ENCODE measurements at regions of chr12 and their contacts with region 1.

Region 1: DNA sequence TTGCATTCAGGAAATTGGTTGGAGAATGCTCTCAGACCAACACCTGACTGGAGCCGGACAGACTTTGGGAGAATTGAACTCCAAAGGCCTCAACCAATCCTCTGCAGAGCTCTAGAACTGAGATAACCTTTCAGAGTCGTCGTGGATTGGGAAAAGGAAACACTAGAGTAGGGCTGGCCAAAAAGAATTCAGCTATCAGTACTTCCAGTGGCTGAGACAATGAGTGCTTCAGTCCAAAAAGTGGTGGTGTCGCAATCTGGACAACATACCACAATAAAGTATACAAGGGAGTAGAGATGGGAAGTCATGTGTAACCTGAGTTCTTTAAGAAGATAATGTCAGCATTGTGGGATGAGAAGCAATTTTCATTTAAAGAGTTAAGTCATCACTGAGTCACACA is 377.1 kb downstream of the SLC16A7 start:
- DNase-seq: peak; percentile 50
- H3K4me3 Mint-ChIP-seq: peak overlapping the region; percentile 46
- H3K27ac Mint-ChIP-seq: peak overlapping the region; percentile 73
- H3K4me1 Mint-ChIP-seq: peaks cover 40% of the 10 kb centered on the region
- H3K27me3 Mint-ChIP-seq: no peaks in the 10 kb centered on the region
- CTCF ChIP-seq: no peak

Region 2: GRCh38 chr12:59636945-59637691 is 335.8 kb before region 1 on chr12:
- CTCF ChIA-PET with region 1: no interaction called
- intact Hi-C with region 1: no loop called
- DNase-seq: no peak
- H3K4me3 Mint-ChIP-seq: no peak overlapping the region
- H3K27ac Mint-ChIP-seq: peak overlapping the region; percentile 30
- H3K4me1 Mint-ChIP-seq: peaks cover 12% of the 10 kb centered on the region
- H3K27me3 Mint-ChIP-seq: no peaks in the 10 kb centered on the region
- CTCF ChIP-seq: no peak

Region 3: DNA sequence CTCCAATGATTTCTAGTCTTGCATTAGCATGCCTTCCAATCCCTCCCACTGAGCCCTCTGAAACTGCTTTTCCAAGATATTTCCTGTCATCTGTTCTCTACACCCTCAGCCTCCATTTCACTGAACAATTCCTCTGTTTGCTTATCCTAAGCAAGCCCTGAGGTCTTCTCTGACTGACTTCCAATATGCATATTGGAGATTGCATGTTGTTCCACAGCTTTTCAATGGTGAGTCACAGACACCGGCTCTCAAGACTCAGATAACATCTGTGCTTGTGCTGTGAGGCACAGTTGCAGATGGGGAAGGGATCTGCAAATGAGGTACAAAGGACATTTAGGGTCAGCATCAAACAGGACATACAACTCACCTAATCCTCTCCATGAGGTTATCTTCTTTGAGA is 236.1 kb before region 1 on chr12:
- CTCF ChIA-PET with region 1: no interaction called
- intact Hi-C with region 1: no loop called
- DNase-seq: peak; percentile 9
- H3K4me3 Mint-ChIP-seq: no peak overlapping the region
- H3K27ac Mint-ChIP-seq: peak overlapping the region; percentile 21
- H3K4me1 Mint-ChIP-seq: peaks cover 16% of the 10 kb centered on the region
- H3K27me3 Mint-ChIP-seq: no peaks in the 10 kb centered on the region
- CTCF ChIP-seq: no peak

Region 4: GRCh38 chr12:59843313-59843712 is 129.6 kb before region 1 on chr12:
- CTCF ChIA-PET with region 1: no interaction called
- intact Hi-C with region 1: loop called (anchors 10 kb)
- DNase-seq: no peak
- H3K4me3 Mint-ChIP-seq: no peak overlapping the region
- H3K27ac Mint-ChIP-seq: no peak overlapping the region
- H3K4me1 Mint-ChIP-seq: peaks cover 23% of the 10 kb centered on the region
- H3K27me3 Mint-ChIP-seq: no peaks in the 10 kb centered on the region
- CTCF ChIP-seq: no peak

Region 5: GRCh38 chr12:59940631-59941342 is 32.2 kb before region 1 on chr12:
- CTCF ChIA-PET with region 1: interaction called, 4 read pairs
- intact Hi-C with region 1: loop called (anchors 2 kb)
- DNase-seq: no peak
- H3K4me3 Mint-ChIP-seq: peak overlapping the region; percentile 52
- H3K27ac Mint-ChIP-seq: peak overlapping the region; percentile 45
- H3K4me1 Mint-ChIP-seq: peaks cover 59% of the 10 kb centered on the region
- H3K27me3 Mint-ChIP-seq: no peaks in the 10 kb centered on the region
- CTCF ChIP-seq: no peak

Region 6: GRCh38 chr12:60191676-60192359 is 218.9 kb after region 1 on chr12:
- CTCF ChIA-PET with region 1: no interaction called
- intact Hi-C with region 1: loop called (anchors 10 kb)
- DNase-seq: no peak
- H3K4me3 Mint-ChIP-seq: no peak overlapping the region
- H3K27ac Mint-ChIP-seq: no peak overlapping the region
- H3K4me1 Mint-ChIP-seq: peaks cover 26% of the 10 kb centered on the region
- H3K27me3 Mint-ChIP-seq: no peaks in the 10 kb centered on the region
- CTCF ChIP-seq: no peak

Measured in Calu3 (cell line).